ENCODE measurements at regions of chr4 and their contacts with region 1.

Region 1: GRCh38 chr4:158253350-158253980 is 43.2 kb downstream of the TMEM144 start:
- DNase-seq: no peak
- H3K4me3 ChIP-seq: no peak overlapping the region
- H3K27ac ChIP-seq: no peak overlapping the region
- H3K4me1 ChIP-seq: peaks cover 0 to 3% (median 0%) of the 10 kb centered on the region in 4 donors
- H3K27me3 ChIP-seq: no peaks in the 10 kb centered on the region
- CTCF ChIP-seq: peak; percentile 51 to 60 (median 57)
- EP300 ChIP-seq: no peak
- POLR2A ChIP-seq: no peak

Region 2: DNA sequence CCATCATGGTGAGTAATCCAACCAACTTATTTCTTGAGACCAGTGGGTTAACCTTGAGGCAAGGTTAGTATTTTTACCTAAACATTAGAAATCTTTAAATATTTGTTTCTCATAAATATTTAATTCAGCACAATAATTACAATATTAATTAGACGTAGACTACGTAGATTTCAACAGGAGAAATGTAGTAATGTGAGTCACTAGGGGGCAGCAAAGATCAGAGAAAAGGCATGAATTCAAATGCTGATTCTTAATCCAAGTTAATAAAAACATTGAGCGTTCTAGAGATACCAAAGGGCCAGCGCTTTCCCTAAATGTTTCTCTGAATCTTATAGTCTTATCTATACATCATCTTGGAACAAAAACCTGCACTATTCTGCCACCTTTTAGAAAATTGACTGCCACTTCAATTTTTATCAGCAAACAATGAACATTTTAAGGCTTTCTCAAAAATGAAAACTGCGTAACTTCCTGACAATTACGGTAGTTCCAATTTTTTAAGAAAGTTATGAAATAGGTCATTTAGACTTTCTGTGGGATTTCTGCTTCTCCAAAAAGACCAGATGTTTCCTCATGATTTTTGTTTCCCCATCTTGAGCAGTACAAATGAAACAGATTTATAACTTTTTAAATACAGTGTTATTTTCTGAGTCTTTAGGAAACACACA is 261.3 kb before region 1 on chr4:
- intact Hi-C with region 1: loop called (anchors 10 kb)
- DNase-seq: no peak
- H3K4me3 ChIP-seq: peak overlapping the region; percentile 32 to 52 (median 37)
- H3K27ac ChIP-seq: peak overlapping the region in 3 of 4 donors; percentile 22 to 67 (median 49)
- H3K4me1 ChIP-seq: peaks cover 0 to 13% (median 8%) of the 10 kb centered on the region in 4 donors
- H3K27me3 ChIP-seq: no peaks in the 10 kb centered on the region
- CTCF ChIP-seq: peak; percentile 68 to 74 (median 74)
- EP300 ChIP-seq: no peak
- POLR2A ChIP-seq: no peak

Region 3: DNA sequence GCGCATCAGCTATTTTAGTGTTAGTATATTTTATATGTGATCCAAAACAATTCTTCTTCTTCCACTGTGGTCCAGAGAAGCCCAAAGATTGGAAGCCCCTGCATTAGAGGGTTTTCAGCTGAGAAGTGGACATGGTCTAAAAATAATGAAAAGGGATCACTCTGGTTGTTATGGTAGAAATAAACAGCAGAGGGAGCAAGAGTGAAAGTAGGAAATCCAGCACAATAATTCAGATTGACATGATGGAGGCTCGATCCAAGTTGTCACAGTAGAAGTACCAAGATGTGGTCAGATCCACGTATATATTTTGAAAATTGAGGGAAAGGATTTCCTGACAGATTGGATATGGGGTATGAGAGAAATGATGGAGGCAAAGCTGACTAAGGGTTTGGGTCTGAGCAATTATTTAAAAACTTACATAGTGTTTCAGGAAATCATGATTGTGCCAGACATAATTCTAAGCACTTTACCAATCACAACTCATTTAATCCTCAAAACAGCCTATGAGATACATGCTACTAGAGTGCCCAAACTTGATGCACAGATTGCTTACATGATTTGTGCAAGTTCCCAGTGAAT is 60.2 kb before region 1 on chr4:
- intact Hi-C with region 1: loop called (anchors 5 kb)
- DNase-seq: no peak
- H3K4me3 ChIP-seq: no peak overlapping the region
- H3K27ac ChIP-seq: no peak overlapping the region
- H3K4me1 ChIP-seq: peaks cover 0 to 6% (median 0%) of the 10 kb centered on the region in 4 donors
- H3K27me3 ChIP-seq: no peaks in the 10 kb centered on the region
- CTCF ChIP-seq: peak; percentile 50 to 66 (median 53)
- EP300 ChIP-seq: no peak
- POLR2A ChIP-seq: no peak

Region 4: DNA sequence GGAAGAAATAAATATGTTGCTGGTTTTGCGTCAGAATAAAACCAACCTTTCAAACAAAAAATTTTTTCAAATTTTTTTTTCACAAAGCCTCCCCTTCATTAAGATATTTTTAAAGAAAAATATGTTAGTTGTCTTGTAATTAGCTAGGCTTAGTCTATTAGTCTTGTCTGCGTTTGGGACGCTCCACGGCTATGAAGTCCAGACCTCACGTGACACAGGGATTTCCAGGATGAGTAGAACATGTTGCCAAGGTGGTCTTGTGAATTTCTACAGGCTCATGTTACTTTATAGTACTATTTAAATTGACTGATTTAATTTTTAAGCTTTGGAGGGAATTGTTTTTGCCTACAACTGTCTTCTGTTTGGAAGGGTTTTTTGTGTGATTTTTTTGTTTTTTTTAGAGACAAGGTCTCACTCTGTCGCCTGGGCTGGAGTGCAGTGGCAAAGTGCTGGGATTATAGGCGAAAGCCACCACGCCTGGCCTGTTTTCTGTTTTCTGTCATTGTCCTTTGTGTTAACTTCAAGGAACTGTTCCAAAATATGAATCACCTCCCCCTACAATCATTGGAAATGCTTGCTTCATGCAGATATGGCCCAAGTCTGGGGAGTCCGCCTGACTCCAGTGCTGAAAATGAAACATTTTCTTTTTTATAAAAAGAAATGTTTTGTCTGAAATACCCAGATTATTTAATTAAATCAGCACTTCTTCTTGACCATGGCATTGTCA is 17.0 kb before region 1 on chr4:
- intact Hi-C with region 1: no loop called
- DNase-seq: no peak
- H3K4me3 ChIP-seq: no peak overlapping the region
- H3K27ac ChIP-seq: no peak overlapping the region
- H3K4me1 ChIP-seq: no peaks in the 10 kb centered on the region
- H3K27me3 ChIP-seq: no peaks in the 10 kb centered on the region
- CTCF ChIP-seq: no peak
- EP300 ChIP-seq: no peak
- POLR2A ChIP-seq: no peak

Region 5: GRCh38 chr4:158624889-158625478 is 371.5 kb after region 1 on chr4:
- intact Hi-C with region 1: loop called (anchors 2 kb)
- DNase-seq: no peak
- H3K4me3 ChIP-seq: no peak overlapping the region
- H3K27ac ChIP-seq: no peak overlapping the region
- H3K4me1 ChIP-seq: peaks cover 0 to 13% (median 0%) of the 10 kb centered on the region in 4 donors
- H3K27me3 ChIP-seq: no peaks in the 10 kb centered on the region
- CTCF ChIP-seq: peak; percentile 48 to 66 (median 55)
- EP300 ChIP-seq: no peak
- POLR2A ChIP-seq: no peak